ENCODE measurements at regions of chr1 and their contacts with region 1.

Region 1: GRCh38 chr1:15272009-15272788 is 25.2 kb downstream of the FHAD1 start:
- DNase-seq: peak; percentile 23 to 70
- H3K4me3 ChIP-seq: peak overlapping the region in 2 of 4 experiments; percentile 21 to 41; a peak in 3 of 8 replicates
- H3K27ac ChIP-seq: no peak overlapping the region
- H3K4me1 ChIP-seq: peaks cover 0 to 6% (median 0%) of the 10 kb centered on the region in 4 experiments; a peak in 2 of 7 replicates
- H3K27me3 ChIP-seq: peaks cover 0 to 4% (median 1%) of the 10 kb centered on the region in 4 experiments; a peak in 2 of 7 replicates
- CTCF ChIP-seq: peak; percentile 19 to 89 (median 85)
- EP300 ChIP-seq: no peak
- POLR2A ChIP-seq: no peak
- RAD21 ChIP-seq: peak; percentile 92 to 96

Region 2: DNA sequence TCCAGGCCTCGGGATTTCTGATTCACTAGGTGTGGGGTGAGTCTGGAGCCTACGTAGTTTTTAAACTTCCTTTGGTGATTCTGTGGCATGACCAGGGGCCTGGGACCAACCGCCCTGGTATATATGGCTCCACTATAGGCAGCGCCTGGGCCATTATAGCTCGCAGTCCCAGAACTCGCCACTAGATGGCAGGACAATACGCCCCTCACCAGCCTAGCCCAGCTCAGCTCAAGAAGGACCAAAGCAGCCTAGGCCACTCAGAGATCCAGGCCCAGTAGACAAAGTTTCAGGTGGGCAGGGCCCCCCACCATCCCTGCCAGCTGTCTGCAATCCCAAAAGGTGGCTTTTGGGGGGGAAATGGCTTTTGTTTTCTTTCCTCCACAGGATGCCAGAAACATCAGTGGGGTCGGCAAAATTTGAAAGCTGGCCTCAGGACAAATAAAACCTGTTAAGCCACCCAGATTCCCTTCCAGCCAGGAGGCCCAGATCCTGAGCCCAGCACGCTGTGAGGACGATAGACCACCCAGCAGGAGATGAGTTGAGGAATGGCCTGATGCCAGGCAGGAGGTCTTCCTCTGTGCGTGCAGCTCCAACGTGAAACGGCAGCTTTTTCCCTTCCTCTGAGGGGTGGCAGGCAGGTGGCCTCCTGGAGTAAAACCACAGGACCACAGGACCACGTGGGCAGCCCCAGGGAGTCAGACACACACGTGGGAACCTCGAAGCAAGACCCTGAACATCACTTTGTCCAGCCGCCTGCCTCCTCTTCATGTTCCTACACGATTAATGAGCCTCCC is 143.5 kb before region 1 on chr1:
- CTCF ChIA-PET with region 1: interaction called, 49 read pairs
- POLR2A ChIA-PET with region 1: interaction called, 4 read pairs
- DNase-seq: peak; percentile 56 to 94
- H3K4me3 ChIP-seq: no peak overlapping the region
- H3K27ac ChIP-seq: no peak overlapping the region
- H3K4me1 ChIP-seq: no peaks in the 10 kb centered on the region
- H3K27me3 ChIP-seq: no peaks in the 10 kb centered on the region
- CTCF ChIP-seq: peak; percentile 92 to 96 (median 94)
- EP300 ChIP-seq: no peak
- POLR2A ChIP-seq: no peak
- RAD21 ChIP-seq: peak; percentile 91 to 92

Region 3: DNA sequence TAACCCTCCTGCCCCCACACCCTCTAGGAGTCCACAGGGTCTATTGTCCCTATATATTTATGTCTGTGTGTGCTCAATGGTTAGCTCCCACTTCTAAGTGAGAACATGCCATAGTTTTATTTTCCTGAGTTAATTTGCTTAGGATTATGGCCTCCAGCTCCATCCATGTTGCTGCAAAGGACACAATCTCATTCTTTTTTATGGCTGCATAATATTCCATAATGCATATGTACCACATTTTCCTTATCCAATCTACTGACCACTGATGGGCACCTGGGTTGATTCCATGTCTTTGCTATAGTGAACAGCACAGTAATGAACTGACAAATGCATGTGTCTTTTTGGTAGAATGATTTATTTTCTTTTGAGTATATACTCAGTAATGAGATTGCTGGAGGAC is 38.5 kb before region 1 on chr1:
- CTCF ChIA-PET with region 1: interaction called, 13 read pairs
- POLR2A ChIA-PET with region 1: interaction called, 4 read pairs
- DNase-seq: no peak
- H3K4me3 ChIP-seq: no peak overlapping the region
- H3K27ac ChIP-seq: no peak overlapping the region
- H3K4me1 ChIP-seq: peaks cover 0 to 4% (median 1%) of the 10 kb centered on the region in 4 experiments; a peak in 3 of 7 replicates
- H3K27me3 ChIP-seq: no peaks in the 10 kb centered on the region
- CTCF ChIP-seq: no peak
- EP300 ChIP-seq: no peak
- POLR2A ChIP-seq: no peak
- RAD21 ChIP-seq: no peak

Region 4: DNA sequence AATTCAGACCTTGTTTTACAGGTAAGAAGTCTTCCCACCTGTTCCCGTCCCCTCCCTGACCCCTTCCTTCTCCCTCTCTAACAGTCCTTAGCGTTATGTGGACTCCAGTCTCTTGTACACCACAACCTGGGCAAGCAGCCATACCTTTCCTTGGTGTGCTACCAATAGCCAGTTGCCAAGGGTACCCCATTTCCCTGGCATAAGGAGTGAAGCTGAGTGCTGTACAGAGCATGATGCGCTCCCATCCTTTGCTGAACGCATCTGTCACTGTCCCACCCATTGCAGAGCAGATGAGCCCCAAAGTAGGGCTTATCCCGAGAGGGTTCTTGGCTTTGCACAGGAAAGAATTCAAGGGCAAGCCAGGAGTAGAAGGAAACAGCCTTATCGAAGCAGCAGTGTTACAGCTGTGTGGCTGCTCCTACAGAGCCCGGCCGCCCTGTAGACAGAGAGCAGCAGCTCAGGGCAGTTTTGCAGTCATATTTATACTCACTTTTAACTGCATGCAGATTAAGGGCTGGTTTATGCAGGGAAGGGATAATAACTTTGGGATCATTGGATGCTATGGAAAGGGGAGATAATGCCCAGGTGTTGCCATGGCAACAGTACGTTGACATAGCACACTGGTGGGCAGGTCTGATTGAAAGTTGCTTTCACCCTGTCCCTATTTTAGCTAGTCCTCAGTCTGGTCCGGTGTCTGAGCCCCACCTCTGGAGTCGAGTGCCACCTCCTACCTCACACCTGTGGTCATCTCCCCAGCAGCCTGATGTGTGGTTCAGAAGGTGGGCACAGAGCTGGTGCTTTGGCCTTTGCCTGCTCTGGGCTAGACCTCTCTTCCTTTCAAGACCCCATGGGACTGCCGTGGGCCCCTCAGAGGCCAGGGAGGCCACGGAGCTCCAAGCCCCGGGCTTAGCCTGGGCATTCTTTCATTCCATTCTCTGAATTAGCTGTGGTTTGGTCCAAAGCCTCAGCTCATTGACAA is 20.1 kb before region 1 on chr1:
- CTCF ChIA-PET with region 1: interaction called, 16 read pairs
- POLR2A ChIA-PET with region 1: no interaction called
- DNase-seq: no peak
- H3K4me3 ChIP-seq: no peak overlapping the region
- H3K27ac ChIP-seq: no peak overlapping the region
- H3K4me1 ChIP-seq: peaks cover 0 to 2% (median 0%) of the 10 kb centered on the region in 4 experiments; a peak in 1 of 7 replicates
- H3K27me3 ChIP-seq: no peaks in the 10 kb centered on the region
- CTCF ChIP-seq: no peak
- EP300 ChIP-seq: no peak
- POLR2A ChIP-seq: no peak
- RAD21 ChIP-seq: no peak